ENCODE measurements at regions of chr1 and their contacts with region 1.

Region 1: GRCh38 chr1:15617175-15617880 is at the start of gene DDI2:
- DNase-seq: peak; percentile 79
- ATAC-seq: peak; percentile 92
- H3K4me3 ChIP-seq: peak within 1 kb of the TSS; percentile 90
- H3K27ac ChIP-seq: peak within 1 kb of the TSS; percentile 92
- H3K4me1 ChIP-seq: peaks cover 14% of the 10 kb centered on the region
- H3K27me3 ChIP-seq: no peaks in the 10 kb centered on the region
- CTCF ChIP-seq: no peak
- EP300 ChIP-seq: no peak
- POLR2A ChIP-seq: peak; percentile 95
- RAD21 ChIP-seq: no peak
- polyA plus RNA-seq, gene DDI2: 3.3 to 3.6 TPM

Region 2: DNA sequence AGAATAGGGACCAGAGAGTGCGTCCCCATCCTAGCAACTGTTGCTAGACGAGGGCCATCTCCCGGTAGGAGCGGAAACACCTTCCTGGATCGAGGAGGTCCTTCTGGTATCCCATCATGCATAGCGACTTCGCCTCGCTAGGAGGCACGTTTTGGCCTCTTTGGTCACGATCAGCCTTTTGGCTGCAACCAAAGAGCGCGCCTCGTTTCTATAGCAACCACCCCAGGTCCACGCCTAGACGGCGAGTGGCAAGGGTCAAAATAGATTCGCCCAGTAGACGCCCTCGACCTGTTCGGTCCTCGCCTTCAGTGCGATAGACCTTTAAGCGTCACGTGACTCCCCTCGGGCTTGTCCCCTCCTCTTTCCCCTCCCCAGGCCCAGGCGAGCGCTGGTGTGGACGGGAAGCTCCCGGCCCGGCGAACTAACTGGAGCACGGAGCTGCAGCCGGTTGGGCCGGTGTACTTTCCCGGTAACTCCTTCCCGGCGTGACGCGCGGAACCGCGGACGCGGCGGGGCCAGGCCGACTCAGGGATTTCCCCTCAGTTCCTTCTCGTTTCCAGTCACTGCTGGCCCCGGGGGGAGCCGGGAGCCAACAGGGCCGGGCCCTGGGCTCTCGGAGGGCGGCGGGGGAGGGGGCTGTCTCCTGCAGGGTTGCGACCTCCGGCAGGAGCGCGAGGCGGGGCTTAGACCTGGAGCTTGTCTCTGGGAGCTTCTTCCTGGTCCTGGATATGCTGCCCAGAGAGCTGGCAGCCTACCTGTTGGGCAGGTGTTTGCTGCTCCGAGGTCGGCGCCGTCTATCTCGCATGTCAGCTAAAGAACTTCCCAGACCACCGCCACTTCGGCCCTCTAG is 90.6 kb before region 1 on chr1 and contains the start of gene DNAJC16:
- CTCF ChIA-PET with region 1: no interaction called
- POLR2A ChIA-PET with region 1: interaction called, 8 read pairs
- RAD21 ChIA-PET with region 1: interaction called, 5 read pairs
- SMC1A ChIA-PET with region 1: no interaction called
- in situ Hi-C with region 1: no loop called
- intact Hi-C with region 1: loop called (anchors 2 kb)
- DNase-seq: peak; percentile 100
- ATAC-seq: peak; percentile 70
- H3K4me3 ChIP-seq: peak within 1 kb of the TSS; percentile 93
- H3K27ac ChIP-seq: peak within 1 kb of the TSS; percentile 65
- H3K4me1 ChIP-seq: peaks cover 9% of the 10 kb centered on the region; the same call in 1 of the 2 replicates
- H3K27me3 ChIP-seq: no peaks in the 10 kb centered on the region
- CTCF ChIP-seq: peak in 2 of 3 experiments; percentile 9 to 39; a peak in 2 of 6 replicates
- EP300 ChIP-seq: peak in 1 of 2 experiments; percentile 24; a peak in 1 of 4 replicates
- POLR2A ChIP-seq: peak; percentile 83
- RAD21 ChIP-seq: no peak
- polyA plus RNA-seq, gene DNAJC16: 2.4 to 4.4 TPM

Region 3: GRCh38 chr1:15571266-15571665 is 46.1 kb before region 1 on chr1:
- CTCF ChIA-PET with region 1: no interaction called
- POLR2A ChIA-PET with region 1: interaction called, 8 read pairs
- RAD21 ChIA-PET with region 1: interaction called, 3 read pairs
- SMC1A ChIA-PET with region 1: interaction called, 10 read pairs
- in situ Hi-C with region 1: no loop called
- intact Hi-C with region 1: no loop called
- DNase-seq: no peak
- ATAC-seq: no peak; the same call in 2 of the 3 replicates
- H3K4me3 ChIP-seq: no peak overlapping the region
- H3K27ac ChIP-seq: peak overlapping the region; percentile 10; the same call in 1 of the 2 replicates
- H3K4me1 ChIP-seq: peaks cover 8% of the 10 kb centered on the region
- H3K27me3 ChIP-seq: no peaks in the 10 kb centered on the region
- CTCF ChIP-seq: no peak
- EP300 ChIP-seq: no peak
- POLR2A ChIP-seq: no peak
- RAD21 ChIP-seq: no peak

Region 4: DNA sequence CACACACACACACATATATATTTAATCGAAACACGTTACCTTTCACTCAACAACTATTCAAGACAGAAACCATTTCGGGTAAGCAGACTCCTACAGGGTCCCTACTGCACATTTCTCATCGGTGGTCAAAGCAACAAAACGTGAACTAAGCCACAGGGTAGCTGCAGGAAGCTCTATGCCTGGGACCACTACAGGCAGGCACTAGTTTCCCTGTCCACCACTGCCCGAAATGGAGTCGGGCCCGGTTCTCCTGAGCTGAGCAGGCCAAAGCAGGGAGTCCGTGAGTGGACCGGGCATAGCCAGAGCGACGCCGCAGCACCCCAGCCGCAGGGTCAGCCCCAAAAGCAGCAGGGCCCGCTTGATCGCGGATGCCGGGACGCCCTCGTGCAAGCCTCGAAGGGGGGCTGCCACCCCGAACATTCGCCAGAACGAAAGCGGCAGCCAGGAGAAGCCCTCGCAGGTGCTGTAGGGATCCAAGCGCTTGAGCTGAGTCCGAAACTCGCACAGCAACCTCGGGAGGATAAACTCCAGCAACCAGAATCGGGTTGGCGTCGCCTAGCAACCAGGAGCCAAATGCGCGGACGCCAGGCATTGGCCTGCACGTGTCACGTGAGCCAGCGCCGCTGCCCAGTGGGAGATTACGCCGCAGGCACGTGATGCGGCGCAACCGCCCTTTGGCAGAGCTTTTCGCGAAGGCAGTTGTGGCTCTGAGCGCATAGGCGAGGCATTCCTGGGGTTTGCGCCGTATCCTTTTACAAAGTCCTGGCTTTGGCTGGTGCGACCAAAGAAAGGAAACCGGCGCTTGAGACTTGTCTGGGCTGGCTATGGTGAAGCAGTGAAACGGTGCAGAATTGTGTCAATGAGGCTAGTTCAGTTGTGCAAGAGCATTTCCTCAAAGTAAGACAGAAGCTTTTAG is 14.0 kb before region 1 on chr1:
- CTCF ChIA-PET with region 1: interaction called, 3 read pairs
- POLR2A ChIA-PET with region 1: interaction called, 18 read pairs
- RAD21 ChIA-PET with region 1: interaction called, 3 read pairs
- SMC1A ChIA-PET with region 1: interaction called, 5 read pairs
- in situ Hi-C with region 1: no loop called
- intact Hi-C with region 1: no loop called
- DNase-seq: peak; percentile 77
- ATAC-seq: peak; percentile 100
- H3K4me3 ChIP-seq: peak overlapping the region; percentile 69
- H3K27ac ChIP-seq: no peak overlapping the region
- H3K4me1 ChIP-seq: peaks cover 6% of the 10 kb centered on the region
- H3K27me3 ChIP-seq: no peaks in the 10 kb centered on the region
- CTCF ChIP-seq: no peak
- EP300 ChIP-seq: no peak; a peak in 1 of 4 replicates
- POLR2A ChIP-seq: peak; percentile 72
- RAD21 ChIP-seq: no peak

Region 5: GRCh38 chr1:15627343-15627988 is 10.1 kb after region 1 on chr1:
- CTCF ChIA-PET with region 1: interaction called, 11 read pairs
- POLR2A ChIA-PET with region 1: interaction called, 10 read pairs
- RAD21 ChIA-PET with region 1: interaction called, 9 read pairs
- SMC1A ChIA-PET with region 1: interaction called, 20 read pairs
- in situ Hi-C with region 1: no loop called
- intact Hi-C with region 1: no loop called
- DNase-seq: peak; percentile 45
- ATAC-seq: peak; percentile 96
- H3K4me3 ChIP-seq: no peak overlapping the region
- H3K27ac ChIP-seq: peak overlapping the region; percentile 8; the same call in 1 of the 2 replicates
- H3K4me1 ChIP-seq: peaks cover 16% of the 10 kb centered on the region
- H3K27me3 ChIP-seq: no peaks in the 10 kb centered on the region
- CTCF ChIP-seq: no peak
- EP300 ChIP-seq: no peak; a peak in 1 of 4 replicates
- POLR2A ChIP-seq: no peak
- RAD21 ChIP-seq: no peak

Measured in GM12878 (cell line).